GM12878 (cell line): ENCODE measurements at regions of chr3 and their contacts with region 1.

Region 1: GRCh38 chr3:28134792-28135375 is 106.5 kb upstream of the CMC1 start:
- DNase-seq: no peak
- ATAC-seq: peak; percentile 16
- H3K4me3 ChIP-seq: no peak overlapping the region
- H3K27ac ChIP-seq: no peak overlapping the region
- H3K4me1 ChIP-seq: no peaks in the 10 kb centered on the region
- H3K27me3 ChIP-seq: no peaks in the 10 kb centered on the region
- CTCF ChIP-seq: no peak
- EP300 ChIP-seq: no peak
- POLR2A ChIP-seq: no peak
- RAD21 ChIP-seq: no peak

Region 2: DNA sequence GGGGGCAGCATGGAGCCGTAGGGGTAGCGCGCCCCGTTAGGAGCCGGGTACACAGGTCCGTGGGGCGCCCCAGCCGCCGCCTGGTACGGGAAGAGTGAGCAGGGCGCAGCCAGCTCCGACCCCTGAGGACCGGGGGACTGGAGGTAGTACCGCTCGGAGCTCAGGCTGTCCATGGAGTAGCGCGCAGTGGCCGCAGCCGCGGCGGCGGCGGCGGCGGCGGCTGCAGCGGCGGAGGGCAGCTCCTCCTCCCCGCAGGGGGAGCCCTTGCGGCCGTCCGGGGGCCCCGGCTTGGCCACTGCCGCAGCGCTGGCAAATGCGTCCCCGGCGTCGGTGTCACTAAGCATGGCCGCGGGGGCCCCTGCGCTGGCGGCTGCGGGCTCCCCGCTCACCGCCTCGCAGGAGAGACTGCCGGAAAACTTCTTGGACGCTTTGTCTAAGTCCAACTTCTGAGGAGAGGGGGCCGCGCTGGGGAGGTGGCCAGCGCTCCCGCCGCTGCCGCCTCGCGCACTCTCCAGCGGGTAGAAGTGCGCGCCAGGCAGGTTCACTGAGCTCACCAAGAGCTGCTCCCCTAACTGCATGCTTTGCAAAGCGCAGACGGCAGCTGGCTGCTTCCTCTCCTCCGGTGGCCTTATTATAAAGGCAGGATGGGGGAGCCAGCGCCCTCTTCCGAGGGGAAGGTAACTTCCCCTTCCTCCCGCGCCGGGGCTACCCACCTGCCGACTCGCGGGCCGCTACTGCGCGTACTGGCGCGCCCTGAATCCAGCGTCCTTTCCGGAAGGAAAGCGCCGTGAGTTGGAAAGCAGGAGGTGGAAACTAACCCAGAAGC is 413.0 kb before region 1 on chr3 and contains the start of gene EOMES:
- CTCF ChIA-PET with region 1: interaction called, 11 read pairs
- POLR2A ChIA-PET with region 1: interaction called, 34 read pairs
- RAD21 ChIA-PET with region 1: interaction called, 104 read pairs
- SMC1A ChIA-PET with region 1: interaction called, 23 read pairs
- in situ Hi-C with region 1: loop called (anchors 10 kb)
- intact Hi-C with region 1: loop called (anchors 5 kb)
- DNase-seq: no peak
- ATAC-seq: peak; percentile 65
- H3K4me3 ChIP-seq: peak within 1 kb of the TSS; percentile 44; the same call in 1 of the 2 replicates
- H3K27ac ChIP-seq: no peak within 1 kb of the TSS
- H3K4me1 ChIP-seq: no peaks in the 10 kb centered on the region
- H3K27me3 ChIP-seq: peaks cover 2 to 14% of the 10 kb centered on the region in 2 experiments
- CTCF ChIP-seq: peak; percentile 10 to 61 (median 52); a peak in 5 of 6 replicates
- EP300 ChIP-seq: no peak
- POLR2A ChIP-seq: no peak
- RAD21 ChIP-seq: no peak
- polyA plus RNA-seq, gene EOMES: 1.5 to 2.8 TPM

Region 3: DNA sequence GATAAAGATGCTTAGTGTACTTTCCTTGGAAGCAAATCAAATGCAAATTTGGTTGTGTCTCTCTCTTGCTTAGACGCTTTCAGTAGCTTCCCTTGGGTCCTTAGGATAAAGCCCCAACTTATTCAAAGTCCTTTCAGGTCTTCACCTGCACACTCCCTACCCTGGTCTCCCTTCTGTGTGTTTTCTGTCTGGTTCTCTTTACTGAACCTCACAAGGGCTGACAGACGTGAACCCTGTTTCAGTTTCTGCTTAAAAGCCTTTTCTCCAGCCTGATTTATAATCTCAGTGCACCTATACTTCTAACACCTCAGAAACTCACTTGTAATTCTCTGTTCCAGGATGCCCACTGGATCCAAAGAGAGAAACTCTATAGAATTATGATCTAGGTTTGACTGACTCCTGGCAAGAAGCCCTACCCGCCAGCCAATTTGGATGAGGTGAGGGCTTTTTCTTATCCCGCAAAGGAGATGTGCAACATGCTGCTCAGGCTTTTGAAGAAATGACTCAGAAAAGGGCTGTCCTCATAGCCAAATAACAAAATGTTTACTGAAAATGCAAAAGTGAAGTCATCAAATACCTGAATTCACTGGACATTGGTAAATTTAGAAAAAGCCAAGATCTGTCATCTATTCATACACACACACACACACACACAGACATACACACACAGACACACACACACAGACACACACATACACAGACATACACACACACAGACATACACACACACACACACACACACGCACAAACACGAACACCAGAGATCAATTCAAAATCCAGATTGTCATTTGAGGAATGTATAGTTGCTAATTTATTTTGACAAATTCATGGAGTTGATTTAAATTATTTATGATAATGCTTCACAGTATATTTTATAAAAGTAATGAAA is 310.3 kb before region 1 on chr3:
- CTCF ChIA-PET with region 1: no interaction called
- POLR2A ChIA-PET with region 1: no interaction called
- RAD21 ChIA-PET with region 1: no interaction called
- SMC1A ChIA-PET with region 1: no interaction called
- in situ Hi-C with region 1: no loop called
- intact Hi-C with region 1: no loop called
- DNase-seq: no peak
- ATAC-seq: peak; percentile 71
- H3K4me3 ChIP-seq: no peak overlapping the region
- H3K27ac ChIP-seq: no peak overlapping the region
- H3K4me1 ChIP-seq: no peaks in the 10 kb centered on the region
- H3K27me3 ChIP-seq: no peaks in the 10 kb centered on the region
- CTCF ChIP-seq: no peak
- EP300 ChIP-seq: no peak
- POLR2A ChIP-seq: no peak
- RAD21 ChIP-seq: no peak

Region 4: GRCh38 chr3:28042095-28042635 is 92.7 kb before region 1 on chr3:
- CTCF ChIA-PET with region 1: interaction called, 3 read pairs
- POLR2A ChIA-PET with region 1: interaction called, 9 read pairs
- RAD21 ChIA-PET with region 1: interaction called, 16 read pairs
- SMC1A ChIA-PET with region 1: interaction called, 40 read pairs
- in situ Hi-C with region 1: no loop called
- intact Hi-C with region 1: no loop called
- DNase-seq: no peak
- ATAC-seq: peak; percentile 78
- H3K4me3 ChIP-seq: no peak overlapping the region
- H3K27ac ChIP-seq: no peak overlapping the region
- H3K4me1 ChIP-seq: no peaks in the 10 kb centered on the region
- H3K27me3 ChIP-seq: no peaks in the 10 kb centered on the region
- CTCF ChIP-seq: no peak
- EP300 ChIP-seq: peak in 1 of 2 experiments; percentile 57; a peak in 1 of 4 replicates
- POLR2A ChIP-seq: no peak
- RAD21 ChIP-seq: no peak

Region 5: DNA sequence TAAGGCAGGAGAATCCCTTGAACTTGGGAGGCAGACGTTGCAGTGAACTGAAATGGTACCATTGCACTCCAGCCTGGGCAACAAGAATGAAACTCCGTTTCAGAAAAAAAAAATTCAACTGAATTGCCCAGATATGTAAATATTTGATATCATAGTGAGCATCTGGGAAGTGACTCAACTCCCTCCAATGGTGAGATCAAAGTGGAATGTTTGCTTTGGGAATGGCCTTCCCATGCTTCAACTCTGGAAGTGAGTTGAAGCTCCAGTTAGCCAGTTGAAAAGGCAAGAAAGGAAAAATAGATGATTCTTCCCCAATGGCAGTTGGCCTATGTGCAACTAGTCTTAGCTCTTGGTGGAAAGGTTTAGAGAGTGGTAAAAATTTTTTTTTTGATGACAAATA is 25.1 kb before region 1 on chr3:
- CTCF ChIA-PET with region 1: no interaction called
- POLR2A ChIA-PET with region 1: interaction called, 4 read pairs
- RAD21 ChIA-PET with region 1: interaction called, 3 read pairs
- SMC1A ChIA-PET with region 1: interaction called, 15 read pairs
- in situ Hi-C with region 1: no loop called
- intact Hi-C with region 1: no loop called
- DNase-seq: no peak
- ATAC-seq: no peak
- H3K4me3 ChIP-seq: no peak overlapping the region
- H3K27ac ChIP-seq: no peak overlapping the region
- H3K4me1 ChIP-seq: no peaks in the 10 kb centered on the region
- H3K27me3 ChIP-seq: no peaks in the 10 kb centered on the region
- CTCF ChIP-seq: no peak
- EP300 ChIP-seq: no peak
- POLR2A ChIP-seq: no peak
- RAD21 ChIP-seq: no peak

Region 6: DNA sequence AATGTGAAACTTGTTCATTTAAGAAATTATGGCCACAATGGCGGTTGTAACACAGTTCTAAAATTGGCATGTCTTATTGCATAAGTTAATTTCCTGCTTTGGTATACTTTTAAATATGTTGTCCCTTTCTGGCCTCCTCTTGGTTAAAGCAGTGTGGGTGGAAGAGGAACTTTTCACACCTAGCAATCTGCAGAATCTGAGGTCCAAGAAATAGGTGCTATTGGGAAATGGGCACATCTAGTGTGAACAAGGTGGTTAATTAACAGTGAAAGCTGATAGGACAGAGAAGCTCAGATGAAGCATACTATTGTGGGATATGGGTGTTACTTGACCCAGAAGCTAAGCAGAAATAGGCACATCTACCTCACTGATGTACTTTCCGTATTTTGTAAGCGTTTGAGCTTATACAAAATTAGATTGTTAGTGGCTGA is 117.1 kb after region 1 on chr3:
- CTCF ChIA-PET with region 1: interaction called, 3 read pairs
- POLR2A ChIA-PET with region 1: interaction called, 4 read pairs
- RAD21 ChIA-PET with region 1: interaction called, 16 read pairs
- SMC1A ChIA-PET with region 1: interaction called, 24 read pairs
- in situ Hi-C with region 1: no loop called
- intact Hi-C with region 1: no loop called
- DNase-seq: no peak
- ATAC-seq: peak; percentile 86
- H3K4me3 ChIP-seq: no peak overlapping the region
- H3K27ac ChIP-seq: no peak overlapping the region
- H3K4me1 ChIP-seq: no peaks in the 10 kb centered on the region; the same call in 1 of the 2 replicates
- H3K27me3 ChIP-seq: no peaks in the 10 kb centered on the region
- CTCF ChIP-seq: no peak
- EP300 ChIP-seq: peak in 1 of 2 experiments; percentile 46; a peak in 2 of 4 replicates
- POLR2A ChIP-seq: no peak
- RAD21 ChIP-seq: no peak